ENCODE measurements at regions of chr17 and their contacts with region 1.

Region 1: DNA sequence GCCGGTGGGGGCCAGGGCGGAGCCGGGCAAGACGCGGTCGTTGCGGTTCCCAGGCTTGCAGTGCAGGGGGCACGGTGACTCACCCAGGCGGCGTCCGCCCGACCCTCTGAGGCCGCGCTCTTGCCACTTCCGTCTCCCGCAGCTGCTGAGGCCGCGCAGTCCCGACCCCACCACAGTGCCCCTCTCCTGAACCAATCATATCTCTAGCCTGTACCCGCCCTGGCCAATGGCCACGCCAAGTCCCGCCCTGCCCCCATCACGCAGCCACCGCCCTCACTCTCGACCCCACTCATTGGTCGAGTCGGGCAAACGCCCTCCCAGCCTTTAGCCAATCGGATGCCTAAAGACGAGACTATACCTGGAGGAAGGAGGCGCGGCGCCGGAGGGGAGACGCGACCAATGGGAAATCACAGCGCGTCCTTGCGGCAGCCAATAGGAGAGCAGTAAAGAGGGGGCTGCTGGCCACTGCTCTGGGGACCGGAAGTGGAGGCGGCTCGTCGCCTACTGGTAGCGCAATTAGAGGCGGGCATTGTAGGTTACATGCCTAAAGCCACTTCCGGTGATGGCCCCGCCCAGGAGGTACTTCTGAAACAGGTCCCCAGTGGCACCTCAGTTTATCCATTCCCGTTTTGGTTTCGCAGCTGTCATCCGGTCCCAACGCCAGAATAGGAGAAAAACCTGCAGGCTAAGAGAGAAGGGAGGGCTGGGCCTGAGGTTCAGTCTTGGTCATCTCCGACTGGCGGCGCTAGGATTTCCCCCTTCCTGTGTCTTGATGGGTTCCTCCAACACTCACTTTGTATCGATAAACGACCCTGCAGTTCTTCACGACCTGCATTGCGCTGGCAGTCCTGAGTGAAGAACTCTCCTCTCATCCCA is 3.5 kb upstream of the MTMR4 start:
- DNase-seq: peak; percentile 100
- H3K27ac ChIP-seq: peak overlapping the region; percentile 97
- CTCF ChIP-seq: no peak

Region 2: DNA sequence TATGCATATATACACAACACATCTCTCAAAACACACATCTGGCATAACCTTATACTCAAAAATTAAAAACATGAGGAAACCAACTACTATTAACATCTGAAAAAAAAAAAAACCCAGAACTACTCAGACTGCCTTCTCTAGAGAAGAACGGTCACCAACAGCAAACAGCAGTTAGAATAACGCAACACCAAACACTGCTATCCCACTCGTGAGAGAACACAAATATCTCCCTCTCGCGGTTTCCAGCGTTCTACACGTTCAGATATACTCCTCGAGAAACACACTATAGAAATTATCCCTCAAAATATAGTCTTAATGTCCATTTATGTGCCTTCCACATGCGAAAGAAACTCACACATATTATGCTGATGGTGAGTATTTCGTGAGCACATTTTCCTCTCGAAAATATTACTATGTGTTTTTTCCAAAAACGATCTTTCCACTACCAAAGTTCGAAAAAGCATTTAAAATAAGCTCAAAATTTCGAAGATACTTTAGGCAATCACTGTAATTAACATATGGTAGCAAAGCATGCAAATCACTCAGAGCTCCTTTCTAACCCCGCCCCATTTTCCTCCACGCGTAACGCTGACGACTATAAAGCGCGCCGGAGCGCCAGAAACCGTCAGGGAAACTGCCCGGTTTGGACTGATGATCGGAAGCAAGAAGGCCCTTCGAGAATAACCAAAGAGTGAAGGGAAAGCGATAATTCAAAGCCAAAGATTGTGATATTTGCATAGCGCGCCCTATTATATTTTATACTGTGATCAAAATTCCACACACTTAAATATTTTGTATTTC is 113.8 kb after region 1 on chr17:
- CTCF ChIA-PET with region 1: interaction called, 11 read pairs
- POLR2A ChIA-PET with region 1: interaction called, 5 read pairs
- DNase-seq: peak; percentile 82
- H3K27ac ChIP-seq: peak overlapping the region; percentile 75
- CTCF ChIP-seq: 0 out of 2 replicates have a peak, but pooled peaks have one; percentile 14

Measured in RWPE1 (cell line).